ENCODE measurements at regions of chr17 and their contacts with region 1.

Region 1: DNA sequence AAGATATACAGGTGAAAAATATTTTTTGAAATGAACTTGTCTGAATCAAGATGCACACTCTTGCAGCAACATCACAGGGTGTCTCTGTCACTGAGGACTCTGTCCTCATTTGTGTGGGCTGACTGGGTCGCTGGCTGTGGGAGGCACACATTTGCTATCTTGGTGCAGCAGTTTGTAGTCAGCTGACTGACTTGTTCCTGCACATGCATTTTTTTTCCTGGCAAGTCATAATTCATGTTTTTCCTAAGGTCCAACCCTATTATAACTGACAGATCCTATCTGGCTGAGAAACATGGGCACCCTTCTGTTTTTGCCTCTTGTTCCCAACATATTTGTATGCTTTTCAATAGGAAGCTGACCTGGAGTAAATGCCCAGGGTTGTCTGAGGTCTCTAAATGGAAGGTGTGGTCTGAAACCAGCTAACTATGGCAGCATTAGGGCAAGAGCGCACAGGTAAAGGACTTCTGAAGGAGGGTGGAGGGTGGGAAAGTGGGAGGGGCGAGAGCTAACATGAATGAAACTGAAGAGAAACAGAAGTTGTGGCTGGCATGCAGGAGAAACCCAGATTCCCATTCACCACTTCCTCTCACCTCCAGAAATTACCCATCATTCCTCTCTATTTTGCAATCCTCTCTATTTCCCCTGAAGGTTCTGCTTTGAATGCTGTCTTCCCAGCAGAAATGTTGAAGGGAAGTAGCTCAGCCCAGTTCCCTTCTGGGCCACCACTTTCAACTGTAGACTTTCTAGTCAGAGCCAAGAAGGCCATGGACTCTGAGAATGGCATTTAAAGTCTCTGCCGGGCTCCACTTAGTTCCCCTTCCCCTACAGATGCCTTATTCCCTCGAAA is 166.1 kb downstream of the PRKCA start:
- DNase-seq: peak in 4 of 10 donors; percentile 24 to 86 (median 56)

Region 2: GRCh38 chr17:66441101-66441661 is 27.3 kb before region 1 on chr17:
- intact Hi-C with region 1: loop called (anchors 2 kb)
- DNase-seq: peak in 5 of 10 donors; percentile 27 to 85 (median 50)

Region 3: DNA sequence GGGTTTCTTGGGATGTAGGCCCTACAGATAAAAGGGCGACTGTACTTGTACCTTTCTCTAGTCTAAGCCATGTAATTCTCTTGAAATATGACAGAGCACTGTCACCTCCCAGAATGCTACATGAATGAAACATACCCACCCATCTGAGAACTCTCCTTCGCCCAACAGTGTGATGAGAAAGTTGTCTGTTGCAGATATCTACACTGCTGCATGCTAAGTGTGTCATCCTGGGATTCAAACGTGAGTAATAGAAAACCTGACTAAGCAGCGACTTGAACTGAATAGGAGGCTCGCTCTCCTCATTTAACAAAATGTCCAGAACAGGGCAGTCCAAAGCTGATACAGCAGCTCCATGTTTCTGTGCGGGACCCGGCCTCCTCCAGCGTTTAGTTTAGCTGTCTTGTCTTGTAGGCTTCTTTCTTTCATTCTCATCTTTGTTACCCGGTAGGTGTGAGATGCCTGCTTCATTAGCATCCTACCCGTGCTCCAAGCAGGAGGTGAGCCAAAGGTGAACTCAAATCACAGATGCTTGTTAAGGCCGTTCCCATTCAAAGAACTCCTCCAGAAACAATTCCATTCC is 45.9 kb after region 1 on chr17:
- intact Hi-C with region 1: no loop called
- DNase-seq: no peak

Measured in posterior cingulate gyrus (tissue), 11 donors.